CD14-positive monocyte (primary cell): ENCODE measurements at regions of chr11 and their contacts with region 1.

Region 1: GRCh38 chr11:59283825-59284772 is 71.4 kb upstream of the MPEG1 start:
- DNase-seq: peak; percentile 65 to 77 (median 70)
- H3K4me3 ChIP-seq: peak overlapping the region; percentile 32 to 71 (median 43)
- H3K4me3 Mint-ChIP-seq: peak overlapping the region; percentile 77 to 90
- H3K27ac ChIP-seq: peak overlapping the region in 1 of 2 donors; percentile 85
- H3K27ac Mint-ChIP-seq: peak overlapping the region; percentile 62 to 98 (median 96)
- H3K4me1 ChIP-seq: peaks cover 32 to 42% of the 10 kb centered on the region in 2 donors
- H3K4me1 Mint-ChIP-seq: peaks cover 49% of the 10 kb centered on the region
- H3K27me3 ChIP-seq: no peaks in the 10 kb centered on the region
- H3K27me3 Mint-ChIP-seq: peaks cover 0 to 9% (median 1%) of the 10 kb centered on the region in 3 donors
- CTCF ChIP-seq: peak; percentile 93

Region 2: GRCh38 chr11:58980159-58980843 is 303.8 kb before region 1 on chr11:
- intact Hi-C with region 1: no loop called
- DNase-seq: no peak
- H3K4me3 ChIP-seq: no peak overlapping the region
- H3K4me3 Mint-ChIP-seq: no peak overlapping the region
- H3K27ac ChIP-seq: no peak overlapping the region
- H3K27ac Mint-ChIP-seq: peak overlapping the region in 1 of 7 donors; percentile 23
- H3K4me1 ChIP-seq: no peaks in the 10 kb centered on the region
- H3K4me1 Mint-ChIP-seq: peaks cover 3% of the 10 kb centered on the region
- H3K27me3 ChIP-seq: no peaks in the 10 kb centered on the region
- H3K27me3 Mint-ChIP-seq: peaks cover 0 to 2% (median 1%) of the 10 kb centered on the region in 3 donors
- CTCF ChIP-seq: no peak

Region 3: GRCh38 chr11:59171508-59172322 is 112.4 kb before region 1 on chr11 and contains the start of gene DTX4:
- intact Hi-C with region 1: loop called in 1 of 2 experiments (anchors 5 kb)
- DNase-seq: peak; percentile 87 to 96 (median 90)
- H3K4me3 ChIP-seq: peak within 1 kb of the TSS; percentile 65 to 82 (median 67)
- H3K4me3 Mint-ChIP-seq: peak within 1 kb of the TSS; percentile 90 to 97
- H3K27ac ChIP-seq: peak within 1 kb of the TSS; percentile 31 to 71
- H3K27ac Mint-ChIP-seq: peak within 1 kb of the TSS in 3 of 7 donors; percentile 21 to 66 (median 27)
- H3K4me1 ChIP-seq: peaks cover 14 to 17% of the 10 kb centered on the region in 2 donors
- H3K4me1 Mint-ChIP-seq: peaks cover 20% of the 10 kb centered on the region
- H3K27me3 ChIP-seq: peaks cover 0 to 9% of the 10 kb centered on the region in 2 donors
- H3K27me3 Mint-ChIP-seq: peaks cover 15 to 22% (median 20%) of the 10 kb centered on the region in 3 donors
- CTCF ChIP-seq: peak; percentile 92
- polyA plus RNA-seq, gene DTX4: 0.96 to 1.9 (median 1.1) TPM

Region 4: DNA sequence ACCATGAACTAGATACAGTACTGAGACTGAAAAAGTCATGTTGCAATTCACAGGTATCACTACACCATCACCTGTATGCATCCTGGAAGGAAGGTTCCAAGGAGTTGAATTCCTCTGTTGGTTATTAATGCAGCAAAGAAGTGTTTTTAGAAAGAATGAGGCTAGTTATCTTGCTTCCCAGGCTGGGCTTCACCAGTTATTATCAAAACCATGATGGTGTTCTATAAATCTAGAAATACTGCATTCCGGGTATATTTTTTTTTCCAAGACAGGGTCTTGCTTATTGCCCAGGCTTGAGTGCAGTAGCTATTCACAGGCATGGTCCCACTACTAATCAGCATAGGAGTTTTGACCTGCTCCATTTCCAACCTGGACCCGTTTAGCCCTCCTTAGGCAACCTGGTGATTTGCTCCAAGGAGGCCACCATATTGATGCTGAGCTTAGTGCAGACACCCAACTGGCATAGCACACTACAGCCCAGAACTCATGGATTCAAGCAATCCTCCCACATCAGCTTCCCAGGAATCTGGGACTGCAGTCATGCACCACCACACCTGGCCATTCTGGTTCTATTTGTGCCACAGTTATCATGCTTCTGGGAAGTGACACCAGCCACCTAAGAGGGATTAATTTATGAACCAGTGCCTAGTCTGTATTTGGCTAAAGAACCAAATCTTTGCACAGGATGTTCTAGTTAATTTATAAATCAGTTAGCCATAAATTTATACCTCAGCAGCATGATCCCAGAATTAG is 69.8 kb before region 1 on chr11:
- intact Hi-C with region 1: loop called in 1 of 2 experiments (anchors 2 kb)
- DNase-seq: no peak
- H3K4me3 ChIP-seq: peak overlapping the region in 1 of 3 experiments; percentile 98
- H3K4me3 Mint-ChIP-seq: peak overlapping the region in 1 of 2 donors; percentile 69
- H3K27ac ChIP-seq: peak overlapping the region in 1 of 2 donors; percentile 93
- H3K27ac Mint-ChIP-seq: peak overlapping the region in 6 of 7 donors; percentile 72 to 99 (median 97)
- H3K4me1 ChIP-seq: peaks cover 64 to 77% of the 10 kb centered on the region in 2 donors
- H3K4me1 Mint-ChIP-seq: peaks cover 67% of the 10 kb centered on the region
- H3K27me3 ChIP-seq: no peaks in the 10 kb centered on the region
- H3K27me3 Mint-ChIP-seq: peaks cover 0 to 7% (median 1%) of the 10 kb centered on the region in 3 donors
- CTCF ChIP-seq: no peak

Region 5: DNA sequence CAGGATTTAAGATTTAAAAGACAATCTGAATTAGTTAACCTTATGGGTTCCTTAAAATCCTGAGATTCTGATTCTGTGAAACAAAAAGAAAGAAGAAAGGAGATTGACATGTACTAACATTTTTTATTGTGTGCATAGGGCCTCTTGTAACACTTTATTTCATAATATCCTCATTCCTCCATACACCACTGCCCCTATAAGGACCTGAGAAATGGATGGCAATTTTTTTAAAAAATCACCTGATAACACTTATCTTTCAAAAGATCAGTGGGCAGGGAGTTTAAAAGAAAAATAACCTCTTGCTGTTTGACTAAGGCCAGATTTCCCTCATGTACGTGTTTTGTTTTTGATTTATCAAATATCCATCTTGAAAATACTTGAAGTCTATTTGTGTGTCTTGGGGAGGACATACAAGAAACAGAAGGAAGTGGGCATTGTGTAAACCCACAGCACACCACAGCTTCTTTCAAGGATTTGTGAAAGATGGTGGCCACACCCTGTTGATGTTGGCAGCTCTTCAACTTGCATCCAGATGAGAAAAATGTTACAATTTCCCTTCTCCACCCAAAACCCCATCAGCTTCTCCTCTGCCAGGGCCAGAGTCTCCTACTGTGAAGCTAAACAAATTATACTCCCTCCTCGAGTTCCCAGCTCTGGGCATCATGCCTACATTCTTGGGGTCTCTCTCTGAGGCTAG is 36.4 kb before region 1 on chr11:
- intact Hi-C with region 1: loop called in 1 of 2 experiments (anchors 5 kb)
- DNase-seq: peak; percentile 76 to 89 (median 80)
- H3K4me3 ChIP-seq: peak overlapping the region in 1 of 3 experiments; percentile 52
- H3K4me3 Mint-ChIP-seq: peak overlapping the region; percentile 49 to 82
- H3K27ac ChIP-seq: peak overlapping the region; percentile 26 to 82
- H3K27ac Mint-ChIP-seq: peak overlapping the region; percentile 82 to 95 (median 92)
- H3K4me1 ChIP-seq: peaks cover 64 to 71% of the 10 kb centered on the region in 2 donors
- H3K4me1 Mint-ChIP-seq: peaks cover 72% of the 10 kb centered on the region
- H3K27me3 ChIP-seq: no peaks in the 10 kb centered on the region
- H3K27me3 Mint-ChIP-seq: peaks cover 0 to 5% (median 0%) of the 10 kb centered on the region in 3 donors
- CTCF ChIP-seq: no peak

Region 6: DNA sequence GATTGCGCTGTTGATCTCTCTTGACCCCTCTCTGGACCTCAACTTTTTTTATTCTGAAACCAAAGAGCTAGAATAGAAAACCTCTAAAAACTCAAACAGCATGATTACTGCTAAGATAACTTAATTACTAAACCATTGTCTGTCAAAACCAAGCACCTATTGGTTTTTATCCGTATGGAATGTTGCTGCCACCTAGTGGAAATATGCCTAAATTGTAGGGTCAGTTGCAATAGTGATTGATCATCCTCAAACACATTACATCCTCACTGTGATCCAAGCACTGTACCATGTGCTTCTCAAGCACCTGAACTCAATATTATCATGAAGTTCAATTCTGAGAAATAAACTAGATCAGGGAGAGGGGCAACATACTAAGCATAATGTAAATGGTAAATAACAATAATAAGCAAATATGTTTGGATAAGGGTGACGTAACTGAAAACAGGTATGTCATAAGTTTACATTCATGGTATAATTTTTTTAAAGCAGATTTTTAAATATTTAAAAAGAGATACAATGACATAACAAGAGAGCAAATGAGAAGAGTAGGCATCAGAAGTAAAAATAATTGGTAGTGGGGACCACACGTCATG is 145.9 kb after region 1 on chr11:
- intact Hi-C with region 1: loop called in 1 of 2 experiments (anchors 10 kb)
- DNase-seq: peak; percentile 66 to 78 (median 66)
- H3K4me3 ChIP-seq: no peak overlapping the region
- H3K4me3 Mint-ChIP-seq: no peak overlapping the region
- H3K27ac ChIP-seq: no peak overlapping the region
- H3K27ac Mint-ChIP-seq: no peak overlapping the region
- H3K4me1 ChIP-seq: no peaks in the 10 kb centered on the region
- H3K4me1 Mint-ChIP-seq: no peaks in the 10 kb centered on the region
- H3K27me3 ChIP-seq: no peaks in the 10 kb centered on the region
- H3K27me3 Mint-ChIP-seq: peaks cover 0 to 3% (median 1%) of the 10 kb centered on the region in 3 donors
- CTCF ChIP-seq: peak; percentile 89

Region 7: GRCh38 chr11:59523541-59523940 is 239.4 kb after region 1 on chr11:
- intact Hi-C with region 1: no loop called
- DNase-seq: no peak
- H3K4me3 ChIP-seq: no peak overlapping the region
- H3K4me3 Mint-ChIP-seq: no peak overlapping the region
- H3K27ac ChIP-seq: no peak overlapping the region
- H3K27ac Mint-ChIP-seq: no peak overlapping the region
- H3K4me1 ChIP-seq: no peaks in the 10 kb centered on the region
- H3K4me1 Mint-ChIP-seq: no peaks in the 10 kb centered on the region
- H3K27me3 ChIP-seq: no peaks in the 10 kb centered on the region
- H3K27me3 Mint-ChIP-seq: peaks cover 0 to 1% (median 0%) of the 10 kb centered on the region in 3 donors
- CTCF ChIP-seq: no peak

Region 8: DNA sequence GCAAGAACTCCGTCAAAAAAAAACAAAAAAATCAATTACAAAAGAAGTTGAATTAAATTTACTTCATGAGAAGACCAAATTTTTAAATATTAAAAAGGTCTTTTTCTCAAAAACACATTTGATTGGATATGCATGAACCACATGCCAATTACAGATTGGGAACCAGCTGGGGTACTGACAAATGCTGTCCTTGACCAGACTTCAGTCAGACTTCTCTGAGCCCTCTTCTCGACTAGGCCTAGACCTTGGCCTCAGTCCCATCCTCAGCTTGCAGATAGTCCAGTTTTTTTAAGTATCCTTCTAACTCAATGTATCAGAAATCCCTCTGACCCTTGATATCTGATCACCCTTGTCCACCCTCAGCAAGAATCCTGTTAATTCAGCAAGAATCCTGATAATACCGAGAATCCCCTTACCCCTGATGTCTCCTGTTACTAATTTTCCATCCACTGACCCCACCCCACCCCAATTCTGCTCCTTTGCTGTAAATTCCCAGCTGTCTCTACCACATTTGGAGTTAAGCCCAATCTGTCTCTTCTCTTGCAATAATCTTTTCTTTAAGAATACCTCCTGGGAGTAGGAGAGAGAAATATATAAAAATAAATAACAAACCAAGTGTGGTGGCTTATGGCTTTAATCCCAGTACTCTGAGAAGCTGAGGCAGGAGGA is 258.2 kb after region 1 on chr11:
- intact Hi-C with region 1: no loop called
- DNase-seq: no peak
- H3K4me3 ChIP-seq: no peak overlapping the region
- H3K4me3 Mint-ChIP-seq: no peak overlapping the region
- H3K27ac ChIP-seq: no peak overlapping the region
- H3K27ac Mint-ChIP-seq: no peak overlapping the region
- H3K4me1 ChIP-seq: peaks cover under 1 to 4% of the 10 kb centered on the region in 2 donors
- H3K4me1 Mint-ChIP-seq: peaks cover 12% of the 10 kb centered on the region
- H3K27me3 ChIP-seq: no peaks in the 10 kb centered on the region
- H3K27me3 Mint-ChIP-seq: no peaks in the 10 kb centered on the region
- CTCF ChIP-seq: no peak